OCI-LY7 (cell line): ENCODE measurements at regions of chr12 and their contacts with region 1.

Region 1: DNA sequence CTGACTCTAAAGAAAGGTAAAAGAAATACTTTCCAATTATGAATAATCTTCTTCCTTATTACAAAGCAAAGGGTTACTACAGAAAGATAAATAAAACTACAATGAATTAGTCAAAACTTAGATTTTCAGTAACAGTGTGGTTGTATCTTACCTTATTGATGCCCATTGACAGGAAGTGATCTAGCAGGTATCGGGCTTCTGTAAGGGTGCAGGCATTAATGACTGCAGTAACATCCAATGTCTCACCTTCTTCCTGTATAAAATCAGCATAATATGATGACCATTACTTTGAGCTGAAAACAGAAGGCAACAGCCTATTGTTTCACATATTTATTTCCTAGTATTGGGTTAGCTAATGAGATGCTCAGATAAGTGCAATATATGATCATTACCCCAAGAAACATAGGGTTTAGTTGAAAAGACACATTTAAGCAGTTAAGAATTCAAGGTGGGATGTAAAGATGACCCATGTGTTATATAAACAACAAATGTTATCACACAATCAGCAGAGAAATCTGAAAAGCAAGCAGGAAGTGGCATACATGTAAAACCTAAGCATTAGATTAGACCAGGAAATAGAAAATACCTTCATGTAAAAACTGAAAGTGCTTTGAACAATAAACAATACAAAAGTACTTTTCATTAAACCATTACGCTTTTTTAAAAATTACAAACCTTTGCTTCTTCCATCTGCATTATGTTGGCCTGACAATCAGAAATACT is 111.2 kb downstream of the KIF21A start:
- DNase-seq: no peak
- H3K4me3 ChIP-seq: no peak overlapping the region
- H3K27ac ChIP-seq: no peak overlapping the region
- H3K4me1 ChIP-seq: no peaks in the 10 kb centered on the region
- CTCF ChIP-seq: no peak

Region 2: DNA sequence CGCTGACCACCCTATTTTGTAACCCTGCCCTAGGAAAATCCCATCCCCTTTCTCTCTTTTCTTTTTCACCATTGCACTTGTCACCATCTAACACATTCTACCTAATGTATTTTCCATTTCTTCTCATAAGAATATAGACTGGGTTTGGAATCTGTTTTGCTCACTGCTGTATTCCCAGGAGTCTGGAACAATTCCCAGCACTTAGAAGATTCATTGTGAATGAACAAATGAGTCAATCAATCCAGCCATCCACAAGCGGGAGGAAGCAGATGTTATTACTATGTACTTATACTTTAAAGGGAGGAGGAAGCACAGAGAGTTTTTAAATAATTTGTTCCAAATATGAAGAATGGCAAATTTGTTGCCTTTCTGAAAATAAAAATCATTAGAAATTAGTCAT is 30.9 kb before region 1 on chr12:
- CTCF ChIA-PET with region 1: no interaction called
- POLR2A ChIA-PET with region 1: interaction called, 10 read pairs
- intact Hi-C with region 1: no loop called
- DNase-seq: no peak
- H3K4me3 ChIP-seq: no peak overlapping the region
- H3K27ac ChIP-seq: no peak overlapping the region
- H3K4me1 ChIP-seq: no peaks in the 10 kb centered on the region
- CTCF ChIP-seq: no peak